Heart right ventricle (tissue), 16 donors: ENCODE measurements at regions of chr3 and their contacts with region 1.

Region 1: DNA sequence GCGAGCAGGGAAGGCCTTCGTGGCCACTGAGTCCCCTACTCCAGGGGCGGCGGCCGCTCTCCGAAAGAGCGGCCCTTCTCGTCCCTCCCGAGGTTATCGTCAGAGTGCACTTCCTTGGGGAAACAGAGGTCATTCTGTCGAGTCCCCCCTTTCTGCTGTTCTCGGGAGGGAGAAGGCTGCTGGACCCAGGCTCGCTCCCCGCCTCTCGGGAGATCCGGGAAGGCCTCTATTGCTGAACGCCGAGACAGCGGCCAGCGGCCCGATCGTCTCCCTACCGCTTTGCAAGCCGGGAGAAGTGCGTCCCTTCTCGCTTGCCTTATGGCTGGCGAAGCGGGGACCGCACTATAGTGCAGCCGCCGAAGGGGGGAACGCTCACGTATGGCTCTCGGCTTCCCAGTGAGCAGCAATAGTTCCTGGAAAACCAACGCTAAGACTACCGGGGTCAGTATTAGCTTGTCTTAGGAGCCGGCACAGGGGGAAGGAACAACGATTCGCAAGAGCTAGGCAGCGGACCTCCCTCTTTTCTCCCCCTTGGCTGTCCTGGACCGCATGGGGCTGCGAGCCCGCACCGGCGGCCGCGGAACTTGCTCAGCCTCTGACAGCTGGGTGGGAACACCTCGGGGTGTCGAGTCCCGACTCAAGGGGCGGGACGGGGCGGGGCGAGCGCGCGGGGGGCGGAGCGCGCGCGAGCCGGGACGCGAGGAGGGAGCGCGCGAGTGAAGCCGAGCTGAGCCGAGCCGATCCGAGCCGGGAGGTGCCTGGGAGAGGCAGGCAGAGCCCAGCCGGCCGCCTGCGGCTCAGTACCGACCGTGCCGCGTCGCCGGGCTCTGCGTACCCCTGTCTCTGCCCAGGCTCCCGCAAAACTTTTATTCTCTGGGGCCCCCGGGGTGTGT is 930 bp upstream of the PPM1L start:
- DNase-seq: peak; percentile 93 to 95
- ATAC-seq: peak; percentile 92 to 98 (median 95)
- H3K4me3 ChIP-seq: peak overlapping the region; percentile 85 to 97 (median 90)
- H3K27ac ChIP-seq: peak overlapping the region; percentile 87 to 97 (median 94)
- H3K4me1 ChIP-seq: peaks cover 0 to 44% (median 35%) of the 10 kb centered on the region in 9 donors
- H3K27me3 ChIP-seq: no peaks in the 10 kb centered on the region
- CTCF ChIP-seq: peak in 1 of 9 donors; percentile 13

Region 2: DNA sequence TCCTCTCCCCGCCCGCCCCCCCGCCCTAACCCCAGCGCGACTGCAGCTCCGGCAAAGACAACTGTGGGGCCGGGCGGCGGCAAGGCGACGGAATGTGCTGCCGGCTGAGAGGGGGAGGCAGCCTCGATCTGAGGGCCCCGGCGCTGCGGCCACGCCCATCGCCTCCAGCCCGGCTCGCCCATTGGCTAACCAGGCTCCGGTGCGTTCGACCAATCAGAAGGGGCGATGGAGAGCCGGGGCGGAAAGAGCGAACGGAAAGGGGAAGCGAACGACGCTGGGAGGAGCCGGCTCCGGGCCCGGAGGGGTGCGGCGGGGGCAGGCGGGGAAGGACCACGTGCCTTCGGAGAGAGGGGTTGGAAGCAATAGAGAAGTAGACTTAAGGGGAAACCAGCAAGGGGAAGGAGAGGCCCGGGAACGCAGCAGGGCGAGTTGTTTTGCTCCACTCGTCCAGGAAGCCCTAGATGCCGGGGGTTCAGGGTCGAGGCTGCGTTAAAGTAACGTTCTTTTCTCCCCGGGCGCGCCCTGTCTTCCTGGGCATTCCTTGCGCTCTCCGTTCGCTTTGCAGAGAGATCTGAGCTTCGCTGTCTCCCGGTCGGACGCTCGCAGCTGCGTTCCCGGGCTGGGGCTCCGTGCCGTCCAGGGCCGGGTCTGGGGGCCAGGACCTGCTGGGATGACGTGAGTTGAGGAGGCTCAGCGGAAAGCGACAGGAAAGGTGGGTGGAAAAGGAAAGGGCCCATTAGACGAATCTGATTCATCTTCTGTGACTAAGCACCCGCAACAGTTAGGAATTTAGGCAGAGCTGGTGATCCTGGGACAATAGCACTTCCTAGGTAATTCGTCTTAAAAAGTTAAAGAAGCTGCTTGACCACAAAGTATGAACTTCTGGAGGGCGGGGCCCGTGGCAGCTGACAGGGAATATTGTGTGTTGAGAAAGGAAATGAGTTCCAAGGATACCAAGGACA is 189.4 kb before region 1 on chr3 and contains the start of gene KPNA4:
- intact Hi-C with region 1: loop called in 6 of 10 experiments (anchors 2 to 10 kb)
- DNase-seq: peak; percentile 97 to 98
- ATAC-seq: peak; percentile 96 to 98 (median 98)
- H3K4me3 ChIP-seq: peak within 1 kb of the TSS; percentile 62 to 94 (median 72)
- H3K27ac ChIP-seq: peak within 1 kb of the TSS; percentile 90 to 99 (median 98)
- H3K4me1 ChIP-seq: peaks cover 0 to 59% (median 46%) of the 10 kb centered on the region in 9 donors
- H3K27me3 ChIP-seq: no peaks in the 10 kb centered on the region
- CTCF ChIP-seq: no peak
- total RNA-seq, gene KPNA4: 110 to 190 (median 151) TPM

Region 3: GRCh38 chr3:160801386-160802118 is 46.5 kb after region 1 on chr3:
- intact Hi-C with region 1: loop called in 5 of 10 experiments (anchors 5 kb)
- DNase-seq: peak; percentile 7 to 56
- ATAC-seq: peak; percentile 79 to 91 (median 86)
- H3K4me3 ChIP-seq: peak overlapping the region in 6 of 10 donors; percentile 17 to 37 (median 30)
- H3K27ac ChIP-seq: peak overlapping the region; percentile 67 to 91 (median 84)
- H3K4me1 ChIP-seq: peaks cover 2 to 79% (median 47%) of the 10 kb centered on the region in 9 donors
- H3K27me3 ChIP-seq: no peaks in the 10 kb centered on the region
- CTCF ChIP-seq: no peak

Region 4: GRCh38 chr3:160921020-160921635 is 166.0 kb after region 1 on chr3:
- intact Hi-C with region 1: loop called in 5 of 10 experiments (anchors 5 kb)
- DNase-seq: peak in 1 of 2 donors; percentile 18
- ATAC-seq: peak in 7 of 8 donors; percentile 71 to 84 (median 78)
- H3K4me3 ChIP-seq: no peak overlapping the region
- H3K27ac ChIP-seq: no peak overlapping the region
- H3K4me1 ChIP-seq: peaks cover 0 to 45% (median 16%) of the 10 kb centered on the region in 9 donors
- H3K27me3 ChIP-seq: no peaks in the 10 kb centered on the region
- CTCF ChIP-seq: peak; percentile 46 to 91 (median 88)

Region 5: DNA sequence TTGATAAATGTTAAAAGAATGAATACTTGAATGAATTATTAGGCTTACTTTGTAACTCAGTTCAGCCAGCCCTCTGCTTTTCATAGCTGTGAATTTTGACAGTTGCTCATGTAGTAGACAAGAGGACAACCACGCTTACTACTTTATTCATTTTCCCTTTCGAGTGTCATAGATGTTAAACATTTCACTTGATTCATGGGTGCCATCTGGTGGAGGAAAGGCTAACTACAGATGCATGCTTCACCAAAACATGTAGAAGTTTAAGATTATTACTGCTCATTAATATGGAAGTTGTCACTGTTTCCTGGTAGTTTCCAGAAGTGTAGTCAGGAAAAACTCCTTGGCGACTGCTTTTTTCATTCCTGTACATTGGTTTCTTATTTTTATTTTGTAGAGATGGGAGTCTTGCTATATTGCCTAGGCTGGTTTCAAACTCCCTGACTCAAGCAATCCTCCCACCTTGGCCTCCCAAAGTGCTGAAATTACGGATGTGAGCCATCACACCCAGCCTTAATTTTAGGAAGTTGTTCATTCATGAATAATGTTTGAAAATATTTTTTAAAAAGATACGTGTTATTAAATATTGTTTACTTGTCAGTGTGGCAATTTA is 186.9 kb after region 1 on chr3:
- intact Hi-C with region 1: loop called in 4 of 10 experiments (anchors 2 to 5 kb)
- DNase-seq: peak in 1 of 2 donors; percentile 79
- ATAC-seq: peak in 7 of 8 donors; percentile 63 to 84 (median 77)
- H3K4me3 ChIP-seq: no peak overlapping the region
- H3K27ac ChIP-seq: no peak overlapping the region
- H3K4me1 ChIP-seq: peaks cover 0 to 7% (median 0%) of the 10 kb centered on the region in 9 donors
- H3K27me3 ChIP-seq: no peaks in the 10 kb centered on the region
- CTCF ChIP-seq: peak; percentile 73 to 94 (median 89)

Region 6: DNA sequence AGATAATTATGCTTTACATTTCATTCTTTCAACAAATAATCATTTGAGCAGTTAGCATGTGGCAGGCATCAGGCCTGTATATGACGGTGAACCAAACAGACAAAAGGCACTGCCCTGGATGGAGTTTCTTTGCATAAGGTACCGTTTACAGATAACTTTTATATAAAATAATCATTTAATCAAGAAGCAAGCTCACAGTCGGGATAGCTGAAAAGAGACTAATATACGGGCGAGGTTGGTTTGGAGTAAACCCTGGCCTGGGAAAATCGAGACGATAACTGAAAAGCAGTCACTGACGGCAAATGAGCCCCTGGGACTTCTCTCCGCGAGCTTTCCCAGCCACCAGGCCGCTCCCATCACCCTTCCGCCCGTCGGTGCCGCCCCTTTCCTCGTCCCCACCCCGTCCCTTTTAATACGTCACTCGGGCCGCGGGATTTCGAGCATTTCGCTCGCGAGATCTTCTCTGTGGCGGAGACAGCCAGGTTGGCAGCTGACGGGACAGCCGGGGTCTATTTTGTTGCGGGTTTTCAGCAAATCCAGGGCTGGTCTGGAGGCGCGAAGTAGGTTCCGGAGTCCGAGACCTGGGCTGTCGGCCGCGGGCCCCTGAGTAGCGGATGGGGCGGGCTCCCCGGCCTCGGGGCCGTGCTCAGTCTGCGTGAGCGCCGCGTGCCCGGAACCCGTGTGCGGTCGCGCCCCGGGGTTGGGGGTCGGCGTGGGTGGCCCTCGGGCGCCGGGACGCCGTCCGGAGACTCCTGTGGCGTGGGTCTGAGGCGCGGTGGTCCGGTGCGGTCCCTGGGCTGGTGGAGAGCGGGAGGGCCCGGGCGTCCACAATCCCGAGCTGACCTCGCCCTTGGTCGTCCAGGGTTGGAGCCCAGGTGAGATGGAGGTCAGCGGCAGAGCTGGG is 466.0 kb after region 1 on chr3 and contains the start of gene NMD3:
- intact Hi-C with region 1: loop called in 2 of 10 experiments (anchors 10 kb)
- DNase-seq: peak; percentile 97 to 98
- ATAC-seq: peak; percentile 97 to 98 (median 97)
- H3K4me3 ChIP-seq: peak within 1 kb of the TSS; percentile 84 to 99 (median 93)
- H3K27ac ChIP-seq: peak within 1 kb of the TSS; percentile 87 to 99 (median 97)
- H3K4me1 ChIP-seq: peaks cover 0 to 54% (median 47%) of the 10 kb centered on the region in 9 donors
- H3K27me3 ChIP-seq: no peaks in the 10 kb centered on the region
- CTCF ChIP-seq: no peak
- total RNA-seq, gene NMD3: 50.9 to 76.9 (median 61.9) TPM